ENCODE measurements at regions of chr12 and their contacts with region 1.

Region 1: DNA sequence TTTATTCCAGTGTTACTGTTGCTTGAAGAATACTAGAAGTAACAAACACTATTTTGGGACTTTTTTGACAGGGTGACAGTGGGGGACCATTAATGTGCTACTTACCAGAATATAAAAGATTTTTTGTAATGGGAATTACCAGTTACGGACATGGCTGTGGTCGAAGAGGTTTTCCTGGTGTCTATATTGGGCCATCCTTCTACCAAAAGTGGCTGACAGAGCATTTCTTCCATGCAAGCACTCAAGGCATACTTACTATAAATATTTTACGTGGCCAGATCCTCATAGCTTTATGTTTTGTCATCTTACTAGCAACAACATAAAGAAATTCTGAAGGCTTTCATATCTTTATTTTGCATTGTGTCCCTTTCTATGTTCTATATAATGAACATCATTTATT is 44.5 kb downstream of the TMPRSS12 start:
- DNase-seq: no peak
- ATAC-seq: no peak
- H3K4me3 ChIP-seq: no peak overlapping the region
- H3K4me3 Mint-ChIP-seq: no peak overlapping the region
- H3K27ac ChIP-seq: no peak overlapping the region
- H3K27ac Mint-ChIP-seq: no peak overlapping the region
- H3K4me1 ChIP-seq: no peaks in the 10 kb centered on the region
- H3K4me1 Mint-ChIP-seq: peaks cover 6% of the 10 kb centered on the region
- H3K27me3 ChIP-seq: no peaks in the 10 kb centered on the region
- H3K27me3 Mint-ChIP-seq: no peaks in the 10 kb centered on the region
- CTCF ChIP-seq: no peak

Region 2: DNA sequence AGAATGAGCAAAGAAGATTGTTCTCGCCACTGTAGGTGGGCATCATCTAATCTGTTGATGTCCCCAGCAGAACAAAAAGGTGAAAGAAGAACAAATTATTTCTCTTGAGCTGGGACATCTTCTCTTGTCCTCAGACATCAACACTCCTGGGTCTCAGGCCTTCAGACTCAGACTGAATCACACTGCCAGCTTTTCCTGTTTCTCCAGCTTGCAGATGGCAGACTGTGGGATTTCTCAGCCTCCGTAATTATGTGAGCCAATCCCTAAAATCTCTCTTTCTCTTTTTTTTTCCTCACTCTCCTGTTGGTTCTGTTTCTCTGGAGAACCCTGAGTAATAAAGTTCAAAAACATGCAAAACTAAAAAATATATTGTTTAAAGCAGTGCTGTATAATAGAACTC is 48.1 kb before region 1 on chr12:
- CTCF ChIA-PET with region 1: no interaction called
- POLR2A ChIA-PET with region 1: no interaction called
- intact Hi-C with region 1: loop called (anchors 10 kb)
- DNase-seq: no peak
- ATAC-seq: no peak
- H3K4me3 ChIP-seq: no peak overlapping the region
- H3K4me3 Mint-ChIP-seq: no peak overlapping the region
- H3K27ac ChIP-seq: no peak overlapping the region
- H3K27ac Mint-ChIP-seq: no peak overlapping the region
- H3K4me1 ChIP-seq: peaks cover 0 to 3% of the 10 kb centered on the region in 2 donors
- H3K4me1 Mint-ChIP-seq: no peaks in the 10 kb centered on the region
- H3K27me3 ChIP-seq: peaks cover 0 to 4% (median 0%) of the 10 kb centered on the region in 4 experiments
- H3K27me3 Mint-ChIP-seq: no peaks in the 10 kb centered on the region
- CTCF ChIP-seq: no peak

Region 3: DNA sequence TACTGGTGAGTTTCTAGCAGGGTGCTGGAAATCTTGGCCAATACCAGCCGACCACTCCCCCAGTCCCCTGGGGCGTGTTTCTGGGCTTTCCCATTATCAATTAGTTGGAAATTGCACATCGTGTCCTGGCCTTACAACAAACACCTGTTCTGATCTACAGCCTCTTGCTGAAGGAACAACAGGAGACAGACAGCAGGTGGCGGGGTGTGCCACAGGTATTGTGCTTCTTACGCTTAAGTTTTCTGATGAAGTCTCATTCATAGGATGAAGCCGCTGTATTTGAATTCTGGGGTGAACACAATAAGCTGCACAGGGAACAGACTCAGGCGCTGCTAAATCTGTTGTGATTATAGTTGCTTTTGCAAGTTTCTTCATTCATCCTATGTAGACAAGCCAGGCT is 65.9 kb after region 1 on chr12:
- CTCF ChIA-PET with region 1: no interaction called
- POLR2A ChIA-PET with region 1: no interaction called
- intact Hi-C with region 1: no loop called
- DNase-seq: no peak
- ATAC-seq: no peak
- H3K4me3 ChIP-seq: no peak overlapping the region
- H3K4me3 Mint-ChIP-seq: no peak overlapping the region
- H3K27ac ChIP-seq: no peak overlapping the region
- H3K27ac Mint-ChIP-seq: no peak overlapping the region
- H3K4me1 ChIP-seq: no peaks in the 10 kb centered on the region
- H3K4me1 Mint-ChIP-seq: peaks cover 2% of the 10 kb centered on the region
- H3K27me3 ChIP-seq: no peaks in the 10 kb centered on the region
- H3K27me3 Mint-ChIP-seq: no peaks in the 10 kb centered on the region
- CTCF ChIP-seq: no peak

Measured in B cell (primary cell).